WTC11 (cell line): ENCODE measurements at regions of chr5 and their contacts with region 1.

Region 1: DNA sequence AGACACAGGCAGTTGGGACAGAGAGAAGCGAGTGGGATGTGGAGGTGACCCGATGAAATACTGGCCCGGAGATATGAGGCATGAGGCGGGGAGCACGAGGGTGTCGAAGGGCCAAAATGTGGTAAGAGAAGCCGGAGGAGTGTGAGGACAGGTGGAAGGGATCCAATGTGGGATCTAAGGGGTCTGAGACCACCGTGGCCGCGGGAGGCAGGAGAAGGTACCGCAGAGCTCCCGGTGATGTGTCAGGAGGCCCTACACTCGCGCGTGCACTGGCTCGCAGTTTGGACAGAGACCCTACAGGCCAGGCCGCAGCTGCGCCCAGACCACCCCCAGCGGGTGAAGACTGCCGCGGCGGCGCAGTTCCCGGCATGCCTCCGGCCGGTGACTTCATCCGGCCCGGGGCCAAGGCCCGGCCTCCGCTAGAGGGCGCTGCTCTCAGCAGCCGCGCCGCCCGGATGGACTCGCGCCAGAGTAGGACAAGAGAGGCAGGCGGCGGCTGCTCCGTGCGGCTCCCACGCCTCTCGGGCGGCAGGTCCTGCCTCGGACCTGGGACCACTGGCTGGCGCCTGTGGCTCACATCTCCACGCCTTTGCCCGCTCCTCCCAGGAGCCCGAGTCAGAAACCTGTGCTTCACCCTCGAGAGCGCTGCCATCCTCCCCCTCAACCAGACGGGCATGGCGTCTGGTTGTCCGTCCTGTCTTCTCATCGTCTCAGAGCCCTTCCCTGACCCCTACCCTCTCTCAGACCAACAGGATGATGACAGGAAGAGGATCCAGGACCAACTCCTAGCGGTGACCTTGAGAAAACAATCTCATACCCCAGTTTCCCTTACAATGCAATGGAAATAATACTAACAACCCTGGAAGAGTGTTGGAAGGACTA is 35.4 kb upstream of the STING1 start:
- DNase-seq: peak; percentile 95
- ATAC-seq: peak; percentile 87
- H3K4me3 Mint-ChIP-seq: peak overlapping the region; percentile 61
- H3K27ac Mint-ChIP-seq: peak overlapping the region; percentile 82; the same call in 1 of the 2 replicates
- H3K4me1 Mint-ChIP-seq: peaks cover 33% of the 10 kb centered on the region
- H3K27me3 Mint-ChIP-seq: peaks cover 24% of the 10 kb centered on the region
- CTCF ChIP-seq: peak; percentile 97

Region 2: GRCh38 chr5:139147483-139148087 is 370.3 kb before region 1 on chr5:
- CTCF ChIA-PET with region 1: no interaction called
- POLR2A ChIA-PET with region 1: no interaction called
- DNase-seq: no peak
- ATAC-seq: peak; percentile 59; the same call in 1 of the 2 replicates
- H3K4me3 Mint-ChIP-seq: no peak overlapping the region
- H3K27ac Mint-ChIP-seq: no peak overlapping the region
- H3K4me1 Mint-ChIP-seq: peaks cover 10% of the 10 kb centered on the region
- H3K27me3 Mint-ChIP-seq: no peaks in the 10 kb centered on the region
- CTCF ChIP-seq: no peak

Region 3: DNA sequence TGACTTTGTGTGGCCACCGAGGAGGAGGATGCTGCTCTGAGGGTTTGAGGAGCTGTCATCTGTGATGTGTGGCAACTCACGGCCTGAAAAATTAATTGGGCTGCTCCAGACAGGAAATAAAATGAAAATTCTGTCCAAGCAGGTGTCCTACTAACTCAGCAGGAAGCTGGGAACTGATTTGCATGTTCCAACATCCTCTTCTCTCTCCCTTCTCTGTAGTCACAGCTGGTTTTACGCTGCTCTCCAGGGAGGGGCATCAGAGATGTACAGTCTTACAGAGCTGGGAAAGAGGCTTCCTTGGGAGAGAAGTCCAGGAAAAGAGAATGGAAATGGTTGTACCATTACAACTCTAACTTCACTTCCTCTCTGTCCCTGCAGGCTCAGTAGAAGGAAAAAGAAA is 295.6 kb before region 1 on chr5:
- CTCF ChIA-PET with region 1: no interaction called
- POLR2A ChIA-PET with region 1: no interaction called
- DNase-seq: no peak
- ATAC-seq: no peak
- H3K4me3 Mint-ChIP-seq: no peak overlapping the region
- H3K27ac Mint-ChIP-seq: no peak overlapping the region
- H3K4me1 Mint-ChIP-seq: peaks cover 10% of the 10 kb centered on the region
- H3K27me3 Mint-ChIP-seq: no peaks in the 10 kb centered on the region; the same call in 1 of the 2 replicates
- CTCF ChIP-seq: no peak

Region 4: GRCh38 chr5:139439013-139439903 is 78.7 kb before region 1 on chr5 and contains the start of gene DNAJC18:
- CTCF ChIA-PET with region 1: interaction called, 18 read pairs
- POLR2A ChIA-PET with region 1: interaction called, 3 read pairs
- DNase-seq: peak; percentile 97
- ATAC-seq: peak; percentile 93
- H3K4me3 Mint-ChIP-seq: peak within 1 kb of the TSS; percentile 95
- H3K27ac Mint-ChIP-seq: peak within 1 kb of the TSS; percentile 99
- H3K4me1 Mint-ChIP-seq: peaks cover 31% of the 10 kb centered on the region
- H3K27me3 Mint-ChIP-seq: peaks cover 4% of the 10 kb centered on the region; the same call in 1 of the 2 replicates
- CTCF ChIP-seq: no peak
- total RNA-seq, gene DNAJC18: 23.7 to 29.1 TPM (median 28.9 TPM) in 3 replicates

Region 5: GRCh38 chr5:139482050-139482889 is 35.7 kb before region 1 on chr5 and contains the start of gene STING1:
- CTCF ChIA-PET with region 1: interaction called, 15 read pairs
- POLR2A ChIA-PET with region 1: no interaction called
- DNase-seq: no peak
- ATAC-seq: no peak
- H3K4me3 Mint-ChIP-seq: no peak within 1 kb of the TSS
- H3K27ac Mint-ChIP-seq: peak within 1 kb of the TSS; percentile 53
- H3K4me1 Mint-ChIP-seq: peaks cover 20% of the 10 kb centered on the region
- H3K27me3 Mint-ChIP-seq: no peaks in the 10 kb centered on the region
- CTCF ChIP-seq: no peak
- total RNA-seq, gene STING1: 0.37 to 1.6 TPM (median 0.64 TPM) in 3 replicates

Region 6: GRCh38 chr5:139574641-139575312 is 56.9 kb after region 1 on chr5:
- CTCF ChIA-PET with region 1: interaction called, 12 read pairs
- POLR2A ChIA-PET with region 1: no interaction called
- DNase-seq: no peak
- ATAC-seq: peak; percentile 74
- H3K4me3 Mint-ChIP-seq: no peak overlapping the region
- H3K27ac Mint-ChIP-seq: peak overlapping the region; percentile 96
- H3K4me1 Mint-ChIP-seq: peaks cover 32% of the 10 kb centered on the region
- H3K27me3 Mint-ChIP-seq: no peaks in the 10 kb centered on the region
- CTCF ChIP-seq: no peak

Region 7: GRCh38 chr5:139690064-139690802 is 172.3 kb after region 1 on chr5:
- CTCF ChIA-PET with region 1: no interaction called
- POLR2A ChIA-PET with region 1: no interaction called
- DNase-seq: no peak
- ATAC-seq: peak; percentile 11
- H3K4me3 Mint-ChIP-seq: peak overlapping the region; percentile 24; the same call in 1 of the 2 replicates
- H3K27ac Mint-ChIP-seq: peak overlapping the region; percentile 19; the same call in 1 of the 2 replicates
- H3K4me1 Mint-ChIP-seq: peaks cover 63% of the 10 kb centered on the region
- H3K27me3 Mint-ChIP-seq: peaks cover 24% of the 10 kb centered on the region
- CTCF ChIP-seq: no peak